ENCODE measurements at regions of chr13 and their contacts with region 1.

Region 1: DNA sequence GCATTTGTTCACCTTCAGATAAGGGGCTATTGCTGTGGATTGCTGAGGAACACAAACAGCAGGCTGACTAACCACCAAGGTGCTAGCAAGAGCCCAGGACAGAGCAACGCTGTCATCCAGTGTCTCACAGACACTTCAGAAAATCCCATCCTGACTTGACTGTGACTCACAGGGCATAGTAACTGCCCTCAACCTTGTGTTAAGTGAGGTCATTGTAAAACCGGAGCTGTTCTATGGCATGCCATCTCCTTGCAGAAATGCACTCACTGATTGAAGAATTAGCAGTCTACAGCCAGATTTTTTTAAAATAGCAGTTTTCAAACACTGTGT is 51.1 kb downstream of the TNFRSF19 start:
- DNase-seq: no peak
- CTCF ChIP-seq: no peak

Region 2: DNA sequence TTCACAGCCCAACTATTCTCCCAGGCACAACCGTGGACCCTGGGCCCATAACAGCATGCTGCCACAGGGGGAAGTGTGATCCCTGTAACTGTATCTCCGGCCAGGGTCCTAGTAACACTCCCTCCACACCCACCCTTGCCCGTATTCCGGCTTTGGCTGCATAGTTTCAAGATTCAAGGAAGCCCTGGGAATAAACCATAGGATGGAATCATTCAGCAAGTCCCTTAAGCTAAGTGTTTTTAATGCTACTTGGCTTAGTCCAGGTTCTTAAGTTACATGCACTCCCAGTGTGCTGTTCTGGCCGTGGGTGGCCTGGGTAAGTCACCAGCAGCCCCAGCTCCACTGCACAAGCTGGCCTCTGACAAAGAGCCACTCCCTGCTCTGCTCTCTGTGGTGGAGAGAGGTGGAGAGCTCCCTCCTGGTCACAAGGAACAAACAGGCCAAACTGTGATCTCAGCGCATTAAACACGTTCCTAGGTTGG is 972.9 kb before region 1 on chr13:
- CTCF ChIA-PET with region 1: no interaction called
- POLR2A ChIA-PET with region 1: no interaction called
- DNase-seq: no peak
- CTCF ChIP-seq: no peak

Region 3: DNA sequence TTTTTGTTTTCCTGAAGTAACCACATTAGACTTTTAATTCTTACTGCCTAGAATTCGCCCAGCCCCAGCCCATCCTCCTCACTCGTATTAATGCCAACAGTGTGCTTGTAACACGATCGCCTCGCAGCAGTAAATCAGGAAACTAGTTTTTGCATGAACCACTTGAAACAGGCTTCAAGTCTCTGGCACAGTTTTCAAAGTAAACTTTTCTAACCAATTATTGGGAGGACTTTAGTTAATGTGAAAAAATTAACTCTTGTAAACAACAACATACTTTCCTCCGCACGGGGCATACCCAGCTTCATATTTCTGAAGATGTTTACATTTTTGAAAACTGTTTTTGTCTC is 11.9 kb before region 1 on chr13:
- CTCF ChIA-PET with region 1: interaction called, 12 read pairs
- POLR2A ChIA-PET with region 1: no interaction called
- DNase-seq: no peak
- CTCF ChIP-seq: no peak

Region 4: GRCh38 chr13:23632048-23632622 is 10.9 kb after region 1 on chr13:
- CTCF ChIA-PET with region 1: interaction called, 10 read pairs
- POLR2A ChIA-PET with region 1: no interaction called
- DNase-seq: no peak
- CTCF ChIP-seq: no peak

Region 5: DNA sequence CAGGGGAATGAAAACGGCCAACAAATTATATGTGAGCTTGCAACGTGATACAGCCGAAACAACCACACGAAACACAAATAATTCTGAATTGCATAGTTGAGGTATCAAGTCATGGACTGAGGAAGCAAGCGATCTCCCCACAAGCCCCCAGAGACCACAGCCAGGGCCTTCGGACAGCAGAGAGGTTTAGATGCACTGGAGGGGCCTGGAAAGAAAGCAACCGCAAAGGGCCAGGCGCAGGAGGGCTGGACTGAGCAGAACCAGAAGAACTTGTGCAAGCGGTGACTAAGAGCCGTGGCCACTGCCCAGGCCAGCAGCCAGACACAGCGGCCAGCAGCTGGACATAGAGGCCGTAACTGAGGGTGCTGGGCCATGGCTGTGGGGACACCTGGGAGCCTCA is 80.4 kb after region 1 on chr13:
- CTCF ChIA-PET with region 1: no interaction called
- POLR2A ChIA-PET with region 1: no interaction called
- DNase-seq: no peak
- CTCF ChIP-seq: no peak

Measured in GM10248 (cell line).